Posterior cingulate gyrus (tissue), 11 donors: ENCODE measurements at regions of chr1 and their contacts with region 1.

Region 1: GRCh38 chr1:174022080-174022975 is at the start of gene RC3H1:
- DNase-seq: peak; percentile 85 to 98 (median 91)

Region 2: GRCh38 chr1:173476664-173477285 is 545.6 kb before region 1 on chr1:
- intact Hi-C with region 1: loop called (anchors 5 kb)
- DNase-seq: peak; percentile 90 to 99 (median 95)

Region 3: DNA sequence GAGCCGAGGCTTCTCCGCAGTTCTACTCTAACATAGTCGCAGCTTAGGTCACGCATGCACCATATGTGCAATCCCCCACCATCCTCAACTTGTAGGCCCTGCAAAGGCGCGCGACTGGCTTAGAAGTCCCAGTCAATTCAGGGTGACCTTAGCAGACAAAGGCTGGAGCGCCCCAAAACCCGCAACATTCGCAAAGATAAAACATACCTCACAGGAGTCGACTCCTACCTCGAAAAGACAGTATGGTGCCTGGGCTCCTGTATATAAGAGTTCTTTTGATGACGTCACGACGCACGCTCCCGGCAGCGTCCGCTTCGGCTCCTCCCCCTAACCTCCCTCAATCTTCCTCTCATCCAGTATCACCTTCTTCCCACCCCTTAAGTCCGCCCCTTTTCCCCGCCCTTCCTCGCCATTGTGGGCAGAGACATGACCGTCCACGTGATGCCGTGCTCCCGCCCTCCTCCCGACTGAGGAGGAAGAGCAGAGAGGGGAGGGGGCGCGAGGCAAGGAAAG is 154.5 kb before region 1 on chr1 and contains the start of gene GAS5:
- intact Hi-C with region 1: loop called (anchors 5 kb)
- DNase-seq: peak; percentile 95 to 100 (median 97)

Region 4: GRCh38 chr1:173876732-173877131 is 145.6 kb before region 1 on chr1:
- intact Hi-C with region 1: loop called (anchors 5 kb)
- DNase-seq: no peak

Region 5: DNA sequence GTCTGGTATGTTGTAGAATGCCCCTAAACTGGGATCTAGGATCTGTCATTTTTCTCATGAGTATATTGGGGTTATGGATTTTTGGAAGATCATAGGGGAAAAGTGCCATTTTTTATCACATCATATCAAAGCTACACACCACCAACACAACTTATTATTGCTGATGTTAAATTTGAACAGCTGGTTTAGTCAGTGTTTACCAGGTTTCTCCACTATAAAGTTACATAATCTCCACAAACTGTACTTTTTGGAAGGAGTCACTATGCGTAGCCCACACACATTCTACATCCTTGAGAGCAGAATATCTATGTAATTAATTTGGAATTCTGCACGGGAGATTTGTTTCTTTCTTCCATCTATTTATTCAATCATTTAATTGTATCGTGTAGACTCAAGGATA is 35.4 kb before region 1 on chr1:
- intact Hi-C with region 1: no loop called
- DNase-seq: no peak

Region 6: GRCh38 chr1:174159252-174160108 is 137.2 kb after region 1 on chr1 and contains the start of gene RABGAP1L:
- intact Hi-C with region 1: loop called (anchors 5 kb)
- DNase-seq: peak; percentile 77 to 98 (median 88)

Region 7: DNA sequence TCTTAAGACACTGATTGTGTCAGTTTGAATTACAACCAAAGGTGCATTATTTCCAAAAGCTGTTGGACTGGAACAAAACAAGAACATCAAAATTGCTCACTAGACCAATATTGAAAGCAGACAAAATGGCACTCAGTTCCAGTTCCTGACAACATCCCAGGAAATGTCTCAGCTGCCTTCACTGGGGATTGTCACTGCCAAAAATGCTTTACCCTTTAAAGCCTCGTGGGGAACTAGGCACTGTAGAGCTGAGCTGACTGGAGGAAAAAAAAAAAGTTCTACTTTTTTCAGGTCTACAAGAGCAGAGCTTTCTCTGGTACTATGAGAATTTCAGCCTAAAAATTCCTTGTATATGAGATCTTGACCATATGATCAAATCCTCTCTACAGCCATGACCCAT is 447.4 kb after region 1 on chr1:
- intact Hi-C with region 1: no loop called
- DNase-seq: no peak

Region 8: GRCh38 chr1:174580801-174581200 is 558.5 kb after region 1 on chr1:
- intact Hi-C with region 1: no loop called
- DNase-seq: no peak